ENCODE measurements at regions of chr3 and their contacts with region 1.

Region 1: DNA sequence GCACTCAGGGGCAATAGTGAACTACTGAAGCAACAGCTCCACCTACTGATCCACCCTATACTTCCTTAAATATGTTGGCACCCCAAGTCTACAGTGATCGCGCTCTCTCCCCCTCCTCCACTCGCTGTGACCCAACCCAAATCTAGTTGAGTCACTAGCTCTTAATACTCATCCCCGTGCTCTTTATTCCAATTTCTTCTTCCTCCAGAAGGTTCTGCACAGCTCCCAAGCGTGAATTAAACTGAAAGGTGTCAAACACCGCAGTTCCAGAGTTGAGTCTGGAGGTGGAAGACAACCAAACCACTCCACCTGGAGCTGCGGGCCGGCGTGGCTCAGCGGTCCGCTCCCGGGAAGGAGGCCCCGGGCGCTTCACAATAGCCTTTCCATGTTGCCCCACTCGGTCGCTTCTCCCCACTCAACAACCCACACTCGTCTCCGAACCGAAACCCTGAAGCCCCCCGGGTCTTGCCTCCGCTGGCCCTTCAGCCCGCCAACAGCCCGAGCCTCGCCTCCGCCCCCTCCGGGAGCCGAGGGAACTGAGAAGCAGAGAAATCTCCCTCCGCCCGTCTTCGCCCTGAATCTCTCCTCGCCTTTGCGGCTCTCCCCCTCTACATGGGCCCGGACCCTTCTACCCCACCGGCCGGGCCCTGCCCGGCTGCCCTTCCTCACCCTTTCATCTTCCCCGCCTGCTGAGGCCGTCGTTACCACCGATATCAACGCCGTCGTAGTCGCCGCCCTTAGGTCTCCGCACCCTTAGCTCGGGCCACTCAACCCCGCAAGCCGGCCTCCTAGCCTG is 578 bp downstream of the NAA50 start:
- DNase-seq: peak; percentile 70
- H3K4me3 Mint-ChIP-seq: peak overlapping the region; percentile 99
- H3K27ac Mint-ChIP-seq: peak overlapping the region; percentile 100
- H3K4me1 Mint-ChIP-seq: peaks cover 83% of the 10 kb centered on the region
- H3K27me3 Mint-ChIP-seq: peaks cover 4% of the 10 kb centered on the region

Region 2: GRCh38 chr3:112561731-112562688 is 1183.5 kb before region 1 on chr3 and contains the starts of genes ATG3 and SLC35A5:
- intact Hi-C with region 1: loop called (anchors 1 kb)
- DNase-seq: peak; percentile 98
- H3K4me3 Mint-ChIP-seq: peak within 1 kb of the TSS; percentile 93
- H3K27ac Mint-ChIP-seq: peak within 1 kb of the TSS; percentile 99
- H3K4me1 Mint-ChIP-seq: peaks cover 31% of the 10 kb centered on the region
- H3K27me3 Mint-ChIP-seq: no peaks in the 10 kb centered on the region
- total RNA-seq, gene ATG3: 66.2 and 69.8 TPM in 2 replicates
- total RNA-seq, gene SLC35A5: 14.9 and 15.5 TPM in 2 replicates

Region 3: DNA sequence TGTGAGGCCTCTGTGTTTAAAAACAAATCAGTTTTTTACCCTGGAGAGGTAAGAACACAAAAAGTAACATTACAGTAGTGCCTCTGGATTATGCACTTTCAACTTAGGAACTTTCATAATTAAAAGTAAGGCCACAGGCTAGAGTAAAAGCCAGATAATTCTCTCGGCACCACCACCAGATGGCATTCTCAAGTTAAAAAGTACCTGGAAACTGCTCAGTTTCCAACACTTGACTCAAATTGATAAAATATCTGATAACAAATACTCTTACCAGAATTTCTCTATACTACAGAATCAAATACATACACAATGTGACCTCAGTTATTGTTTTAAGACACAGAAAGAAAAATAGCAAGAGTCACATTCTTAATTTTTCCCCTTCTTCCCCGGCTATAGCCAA is 250.4 kb before region 1 on chr3:
- intact Hi-C with region 1: loop called (anchors 2 kb)
- DNase-seq: no peak
- H3K4me3 Mint-ChIP-seq: no peak overlapping the region
- H3K27ac Mint-ChIP-seq: no peak overlapping the region
- H3K4me1 Mint-ChIP-seq: no peaks in the 10 kb centered on the region
- H3K27me3 Mint-ChIP-seq: no peaks in the 10 kb centered on the region

Region 4: GRCh38 chr3:113575206-113575605 is 170.3 kb before region 1 on chr3:
- intact Hi-C with region 1: loop called (anchors 1 kb)
- DNase-seq: no peak
- H3K4me3 Mint-ChIP-seq: no peak overlapping the region
- H3K27ac Mint-ChIP-seq: no peak overlapping the region
- H3K4me1 Mint-ChIP-seq: peaks cover 5% of the 10 kb centered on the region
- H3K27me3 Mint-ChIP-seq: no peaks in the 10 kb centered on the region

Region 5: DNA sequence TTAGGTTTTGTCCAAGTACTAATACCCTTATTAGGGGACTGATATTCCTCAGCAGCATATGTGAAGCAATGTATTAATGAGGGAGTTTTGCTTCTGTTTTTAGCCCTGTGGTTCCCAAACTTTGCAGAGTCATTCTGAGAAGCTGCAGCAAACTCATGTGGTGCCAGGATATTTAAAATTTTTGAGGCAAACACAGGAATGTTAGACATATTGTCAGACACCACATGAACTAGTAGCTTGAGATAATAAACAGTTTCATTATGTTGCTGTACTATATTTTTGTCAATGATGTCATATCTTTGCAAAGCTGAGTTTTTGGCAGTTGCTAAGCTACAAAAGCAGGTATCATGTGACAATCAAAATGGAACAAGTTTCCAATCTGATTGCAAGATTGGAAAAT is 38.0 kb after region 1 on chr3:
- intact Hi-C with region 1: loop called (anchors 5 kb)
- DNase-seq: no peak
- H3K4me3 Mint-ChIP-seq: no peak overlapping the region
- H3K27ac Mint-ChIP-seq: no peak overlapping the region
- H3K4me1 Mint-ChIP-seq: peaks cover 8% of the 10 kb centered on the region
- H3K27me3 Mint-ChIP-seq: no peaks in the 10 kb centered on the region

Region 6: GRCh38 chr3:114056130-114057010 is 310.9 kb after region 1 on chr3 and contains the starts of genes CCDC191 and QTRT2:
- intact Hi-C with region 1: loop called (anchors 1 kb)
- DNase-seq: peak; percentile 98
- H3K4me3 Mint-ChIP-seq: peak within 1 kb of the TSS; percentile 98
- H3K27ac Mint-ChIP-seq: peak within 1 kb of the TSS; percentile 97
- H3K4me1 Mint-ChIP-seq: peaks cover 53% of the 10 kb centered on the region
- H3K27me3 Mint-ChIP-seq: peaks cover 2% of the 10 kb centered on the region
- total RNA-seq, gene CCDC191: 1.1 and 2.1 TPM in 2 replicates
- total RNA-seq, gene QTRT2: 54.9 and 57.6 TPM in 2 replicates

Region 7: DNA sequence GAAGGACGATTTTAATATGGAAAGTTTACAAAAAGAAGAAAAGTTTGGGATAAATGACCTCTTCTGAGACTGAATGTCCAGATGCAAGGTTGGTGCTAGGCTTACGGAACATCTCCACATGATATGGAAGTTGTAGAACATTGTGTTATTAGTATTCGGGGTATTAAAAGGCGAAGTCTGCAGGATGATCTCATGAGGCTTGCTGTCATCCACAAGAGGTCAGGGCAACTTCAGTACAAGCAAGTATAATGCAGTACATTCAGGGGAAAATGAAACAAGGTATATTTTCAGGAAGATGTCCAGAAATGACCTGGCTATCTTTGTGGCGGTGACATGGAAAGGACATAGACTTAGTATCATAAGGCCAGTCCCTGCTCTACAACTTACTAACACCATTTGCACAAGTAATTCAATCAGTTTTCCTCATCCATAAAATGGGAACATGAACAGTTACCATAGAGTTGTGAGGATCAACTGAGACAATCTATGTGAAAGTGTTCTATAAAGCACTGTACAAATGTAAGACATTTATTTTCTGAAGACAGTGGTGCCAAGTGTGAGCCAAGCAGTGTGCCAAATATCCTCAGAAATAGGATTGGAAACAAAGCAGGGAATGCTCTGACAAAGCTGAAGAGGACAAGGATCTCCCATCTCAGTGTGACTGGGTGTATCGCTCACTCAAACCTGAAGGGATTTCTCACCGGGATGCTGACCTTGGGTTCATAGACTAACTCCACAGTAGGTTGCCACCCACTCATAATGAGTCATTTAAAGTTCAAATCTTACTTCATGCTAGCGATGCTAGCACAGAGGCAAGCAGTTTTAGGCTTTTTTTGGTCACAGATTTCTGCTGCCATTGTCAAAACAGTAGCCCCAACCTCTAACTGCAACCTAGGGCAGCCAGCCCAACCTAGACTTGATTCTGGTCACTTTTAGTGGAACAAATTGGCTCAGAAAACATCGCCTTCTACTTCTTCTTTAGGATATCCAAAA is 666.6 kb after region 1 on chr3:
- intact Hi-C with region 1: loop called (anchors 2 kb)
- DNase-seq: no peak
- H3K4me3 Mint-ChIP-seq: no peak overlapping the region
- H3K27ac Mint-ChIP-seq: peak overlapping the region; percentile 1
- H3K4me1 Mint-ChIP-seq: peaks cover 26% of the 10 kb centered on the region
- H3K27me3 Mint-ChIP-seq: peaks cover 24% of the 10 kb centered on the region

Measured in activated T-helper 1 cell treated with anti-CD3 and anti-CD28 coated beads, Interleukin-12 subunit alpha, Interleukin-12 subunit beta, Interleukin-2, Interleukin-4 antibody, amounts not matched to agents 30 ng/mL and 10 ng/mL and 1 ng/mL, durations not matched to agents 14 hours and 24 hours and 36 hours (primary cell).